Heart right ventricle (tissue), 16 donors: ENCODE measurements at regions of chr1 and their contacts with region 1.

Region 1: GRCh38 chr1:85894651-85895050 is 186.4 kb upstream of the ZNHIT6 start:
- DNase-seq: peak; percentile 7 to 10
- ATAC-seq: no peak
- H3K4me3 ChIP-seq: no peak overlapping the region
- H3K27ac ChIP-seq: no peak overlapping the region
- H3K4me1 ChIP-seq: no peaks in the 10 kb centered on the region
- H3K27me3 ChIP-seq: no peaks in the 10 kb centered on the region
- CTCF ChIP-seq: peak in 6 of 9 donors; percentile 37 to 59 (median 48)

Region 2: DNA sequence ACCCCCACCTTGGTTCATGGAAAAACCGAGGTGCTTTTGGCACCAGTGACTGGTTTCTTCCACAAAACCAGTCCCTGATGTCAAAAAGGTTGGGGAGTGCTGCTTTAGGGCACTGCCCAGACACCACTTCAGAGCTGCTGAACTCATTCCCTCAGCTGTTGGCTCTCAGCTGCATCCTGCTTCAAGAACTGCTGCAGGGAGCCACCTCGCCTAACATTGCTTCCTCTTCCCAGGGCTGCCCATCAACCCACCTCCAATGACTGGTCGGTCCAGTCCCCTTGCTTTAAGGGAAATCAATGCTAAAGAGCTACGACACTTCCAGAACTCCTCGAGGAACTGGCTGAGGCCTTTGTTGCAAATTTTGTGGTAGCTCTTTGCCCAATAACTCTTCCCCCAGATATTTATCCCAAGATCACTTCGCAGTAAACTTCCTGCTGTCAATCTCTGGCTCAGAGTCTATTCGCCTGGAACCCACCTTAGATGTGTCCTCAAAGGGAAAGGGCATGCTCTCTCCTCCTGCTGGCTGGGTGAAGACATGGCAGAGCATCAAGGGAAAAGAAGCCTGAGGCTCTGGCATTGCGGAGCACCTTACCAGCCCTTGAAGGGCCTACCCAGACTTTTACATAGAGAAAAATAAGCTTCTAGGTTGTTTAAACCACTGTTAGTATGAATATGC is 664.2 kb before region 1 on chr1:
- intact Hi-C with region 1: no loop called
- DNase-seq: no peak
- ATAC-seq: peak in 2 of 8 donors; percentile 20 to 47
- H3K4me3 ChIP-seq: no peak overlapping the region
- H3K27ac ChIP-seq: peak overlapping the region in 3 of 10 donors; percentile 47 to 77 (median 61)
- H3K4me1 ChIP-seq: peaks cover 0 to 23% (median 5%) of the 10 kb centered on the region in 9 donors
- H3K27me3 ChIP-seq: no peaks in the 10 kb centered on the region
- CTCF ChIP-seq: peak in 4 of 9 donors; percentile 10 to 25 (median 15)

Region 3: DNA sequence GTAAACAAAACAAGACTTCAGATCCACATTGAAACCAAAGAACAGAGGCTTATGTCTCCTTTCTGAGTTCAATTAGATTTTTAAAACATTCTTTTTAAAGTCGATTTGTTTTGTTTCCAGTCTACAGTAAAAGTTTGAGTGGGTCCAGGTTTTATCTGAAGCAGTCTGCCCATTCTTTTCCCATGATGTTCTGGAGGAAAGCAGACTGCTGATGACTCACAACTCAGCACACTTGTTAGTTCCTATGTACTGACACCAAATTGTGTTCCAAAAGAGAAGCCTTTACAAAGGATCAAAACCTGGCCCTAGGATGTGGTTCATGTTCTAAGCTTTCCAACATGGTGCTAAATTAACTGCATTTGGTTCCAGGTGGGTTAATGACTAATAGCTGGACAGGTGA is 325.5 kb before region 1 on chr1:
- intact Hi-C with region 1: no loop called
- DNase-seq: no peak
- ATAC-seq: peak in 7 of 8 donors; percentile 35 to 73 (median 65)
- H3K4me3 ChIP-seq: no peak overlapping the region
- H3K27ac ChIP-seq: peak overlapping the region in 6 of 10 donors; percentile 16 to 74 (median 54)
- H3K4me1 ChIP-seq: peaks cover 0 to 32% (median 7%) of the 10 kb centered on the region in 9 donors
- H3K27me3 ChIP-seq: no peaks in the 10 kb centered on the region
- CTCF ChIP-seq: no peak

Region 4: GRCh38 chr1:85818371-85818770 is 76.3 kb before region 1 on chr1:
- intact Hi-C with region 1: no loop called
- DNase-seq: no peak
- ATAC-seq: no peak
- H3K4me3 ChIP-seq: no peak overlapping the region
- H3K27ac ChIP-seq: peak overlapping the region in 2 of 10 donors; percentile 27 to 34
- H3K4me1 ChIP-seq: peaks cover 0 to 6% (median 0%) of the 10 kb centered on the region in 9 donors
- H3K27me3 ChIP-seq: no peaks in the 10 kb centered on the region
- CTCF ChIP-seq: no peak

Region 5: GRCh38 chr1:85862456-85862855 is 32.2 kb before region 1 on chr1:
- intact Hi-C with region 1: no loop called
- DNase-seq: no peak
- ATAC-seq: no peak
- H3K4me3 ChIP-seq: no peak overlapping the region
- H3K27ac ChIP-seq: no peak overlapping the region
- H3K4me1 ChIP-seq: no peaks in the 10 kb centered on the region
- H3K27me3 ChIP-seq: no peaks in the 10 kb centered on the region
- CTCF ChIP-seq: no peak

Region 6: GRCh38 chr1:85952460-85952859 is 57.8 kb after region 1 on chr1:
- intact Hi-C with region 1: loop called in 1 of 10 experiments (anchors 10 kb)
- DNase-seq: no peak
- ATAC-seq: no peak
- H3K4me3 ChIP-seq: no peak overlapping the region
- H3K27ac ChIP-seq: no peak overlapping the region
- H3K4me1 ChIP-seq: no peaks in the 10 kb centered on the region
- H3K27me3 ChIP-seq: no peaks in the 10 kb centered on the region
- CTCF ChIP-seq: no peak

Region 7: GRCh38 chr1:86018283-86018923 is 123.8 kb after region 1 on chr1:
- intact Hi-C with region 1: loop called in 1 of 10 experiments (anchors 10 kb)
- DNase-seq: no peak
- ATAC-seq: no peak
- H3K4me3 ChIP-seq: no peak overlapping the region
- H3K27ac ChIP-seq: no peak overlapping the region
- H3K4me1 ChIP-seq: no peaks in the 10 kb centered on the region
- H3K27me3 ChIP-seq: no peaks in the 10 kb centered on the region
- CTCF ChIP-seq: peak in 8 of 9 donors; percentile 34 to 80 (median 69)